Vagina (tissue), 2 donors: ENCODE measurements at regions of chr1 and their contacts with region 1.

Region 1: DNA sequence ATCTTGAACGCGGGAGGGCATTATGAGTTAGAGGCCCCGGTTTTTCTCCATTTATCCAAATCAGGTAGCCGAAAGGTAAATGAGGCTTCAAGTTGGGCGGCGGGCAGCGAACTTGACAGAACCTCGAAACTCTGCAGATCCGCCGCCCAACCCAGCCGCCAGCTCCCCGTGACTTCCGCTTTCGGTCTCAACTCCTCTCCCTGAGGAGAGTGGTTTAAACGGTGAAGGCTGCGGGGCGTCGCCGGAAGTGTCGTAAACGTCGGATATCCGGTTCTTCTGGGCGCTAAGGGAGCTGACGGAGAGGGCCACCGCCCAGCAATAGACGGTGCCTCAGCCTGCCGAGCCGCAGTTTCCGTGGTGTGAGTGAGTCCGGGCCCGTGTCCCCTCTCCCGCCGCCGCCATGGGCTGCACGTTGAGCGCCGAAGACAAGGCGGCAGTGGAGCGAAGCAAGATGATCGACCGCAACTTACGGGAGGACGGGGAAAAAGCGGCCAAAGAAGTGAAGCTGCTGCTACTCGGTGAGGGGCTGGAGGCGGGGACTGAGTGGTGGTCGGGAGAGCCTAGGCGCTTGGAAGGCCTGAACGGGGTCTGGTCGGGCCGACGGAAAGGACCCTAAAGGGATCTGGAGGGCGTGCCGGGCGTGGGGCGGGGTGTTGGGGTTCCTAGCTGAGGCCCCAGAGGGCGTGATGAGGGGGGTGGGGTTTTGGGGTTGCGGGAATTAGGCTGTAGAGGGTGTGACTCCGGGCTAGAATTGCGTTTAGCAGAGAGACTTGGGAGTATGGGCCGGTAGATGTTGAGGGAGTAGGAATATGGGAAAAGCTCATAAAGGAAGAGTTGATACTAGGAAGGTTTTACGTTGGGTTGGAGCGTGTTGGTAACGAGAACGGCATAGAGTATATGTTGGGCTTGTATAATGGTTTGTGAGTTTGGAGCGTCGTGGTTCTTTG is at the start of gene GNAI3:
- DNase-seq: peak in 1 of 2 donors; percentile 97
- H3K4me3 ChIP-seq: peak within 1 kb of the TSS; percentile 90 to 99
- H3K27ac ChIP-seq: peak within 1 kb of the TSS; percentile 96
- H3K4me1 ChIP-seq: peaks cover 55% of the 10 kb centered on the region
- H3K27me3 ChIP-seq: no peaks in the 10 kb centered on the region
- CTCF ChIP-seq: no peak
- POLR2A ChIP-seq: peak in 1 of 2 donors; percentile 92
- total RNA-seq, gene GNAI3: 4.9 TPM

Region 2: GRCh38 chr1:109579491-109579890 is 30.9 kb after region 1 on chr1:
- intact Hi-C with region 1: no loop called
- DNase-seq: no peak
- H3K4me3 ChIP-seq: no peak overlapping the region
- H3K27ac ChIP-seq: no peak overlapping the region
- H3K4me1 ChIP-seq: peaks cover 21% of the 10 kb centered on the region
- H3K27me3 ChIP-seq: no peaks in the 10 kb centered on the region
- CTCF ChIP-seq: no peak
- POLR2A ChIP-seq: no peak

Region 3: GRCh38 chr1:109620841-109621286 is 72.3 kb after region 1 on chr1:
- intact Hi-C with region 1: loop called (anchors 10 kb)
- DNase-seq: peak; percentile 93 to 94
- H3K4me3 ChIP-seq: peak overlapping the region; percentile 69 to 83
- H3K27ac ChIP-seq: peak overlapping the region; percentile 91
- H3K4me1 ChIP-seq: peaks cover 59% of the 10 kb centered on the region
- H3K27me3 ChIP-seq: no peaks in the 10 kb centered on the region
- CTCF ChIP-seq: no peak
- POLR2A ChIP-seq: no peak

Region 4: GRCh38 chr1:109643385-109644230 is 95.0 kb after region 1 on chr1:
- intact Hi-C with region 1: loop called (anchors 5 kb)
- DNase-seq: peak in 1 of 2 donors; percentile 87
- H3K4me3 ChIP-seq: no peak overlapping the region
- H3K27ac ChIP-seq: no peak overlapping the region
- H3K4me1 ChIP-seq: peaks cover 22% of the 10 kb centered on the region
- H3K27me3 ChIP-seq: no peaks in the 10 kb centered on the region
- CTCF ChIP-seq: peak; percentile 51 to 80 (median 70)
- POLR2A ChIP-seq: no peak

Region 5: GRCh38 chr1:109773146-109773899 is 224.7 kb after region 1 on chr1:
- intact Hi-C with region 1: loop called (anchors 2 kb)
- DNase-seq: no peak
- H3K4me3 ChIP-seq: no peak overlapping the region
- H3K27ac ChIP-seq: no peak overlapping the region
- H3K4me1 ChIP-seq: no peaks in the 10 kb centered on the region
- H3K27me3 ChIP-seq: no peaks in the 10 kb centered on the region
- CTCF ChIP-seq: peak; percentile 56 to 89 (median 78)
- POLR2A ChIP-seq: no peak

Region 6: DNA sequence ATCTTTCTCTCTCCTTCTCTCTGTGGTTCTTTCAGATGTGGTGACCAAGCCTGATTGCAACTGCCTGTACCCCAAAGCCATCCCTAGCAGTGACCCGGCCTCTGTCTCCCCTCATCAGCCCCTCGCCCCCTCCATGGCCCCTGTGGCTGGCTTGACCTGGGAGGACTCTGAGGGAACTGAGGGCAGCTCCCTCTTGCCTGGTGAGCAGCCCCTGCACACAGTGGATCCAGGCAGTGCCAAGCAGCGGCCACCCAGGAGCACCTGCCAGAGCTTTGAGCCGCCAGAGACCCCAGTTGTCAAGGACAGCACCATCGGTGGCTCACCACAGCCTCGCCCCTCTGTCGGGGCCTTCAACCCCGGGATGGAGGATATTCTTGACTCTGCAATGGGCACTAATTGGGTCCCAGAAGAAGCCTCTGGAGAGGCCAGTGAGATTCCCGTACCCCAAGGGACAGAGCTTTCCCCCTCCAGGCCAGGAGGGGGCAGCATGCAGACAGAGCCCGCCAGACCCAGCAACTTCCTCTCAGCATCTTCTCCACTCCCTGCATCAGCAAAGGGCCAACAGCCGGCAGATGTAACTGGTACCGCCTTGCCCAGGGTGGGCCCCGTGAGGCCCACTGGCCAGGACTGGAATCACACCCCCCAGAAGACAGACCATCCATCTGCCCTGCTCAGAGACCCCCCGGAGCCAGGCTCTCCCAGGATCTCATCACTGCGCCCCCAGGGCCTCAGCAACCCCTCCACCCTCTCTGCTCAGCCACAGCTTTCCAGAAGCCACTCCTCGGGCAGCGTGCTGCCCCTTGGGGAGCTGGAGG is 374.7 kb after region 1 on chr1:
- intact Hi-C with region 1: loop called (anchors 5 kb)
- DNase-seq: no peak
- H3K4me3 ChIP-seq: no peak overlapping the region
- H3K27ac ChIP-seq: peak overlapping the region; percentile 82
- H3K4me1 ChIP-seq: peaks cover 46% of the 10 kb centered on the region
- H3K27me3 ChIP-seq: no peaks in the 10 kb centered on the region
- CTCF ChIP-seq: peak in 1 of 3 experiments; percentile 14
- POLR2A ChIP-seq: no peak

Region 7: GRCh38 chr1:109984456-109985275 is 436.1 kb after region 1 on chr1 and contains the start of gene AHCYL1:
- intact Hi-C with region 1: loop called (anchors 5 kb)
- DNase-seq: peak; percentile 99
- H3K4me3 ChIP-seq: peak within 1 kb of the TSS; percentile 91 to 94
- H3K27ac ChIP-seq: peak within 1 kb of the TSS; percentile 97
- H3K4me1 ChIP-seq: peaks cover 75% of the 10 kb centered on the region
- H3K27me3 ChIP-seq: no peaks in the 10 kb centered on the region
- CTCF ChIP-seq: peak; percentile 97 to 100 (median 99)
- POLR2A ChIP-seq: peak; percentile 88 to 98
- total RNA-seq, gene AHCYL1: 75.6 TPM